ENCODE measurements at regions of chr9 and their contacts with region 1.

Region 1: DNA sequence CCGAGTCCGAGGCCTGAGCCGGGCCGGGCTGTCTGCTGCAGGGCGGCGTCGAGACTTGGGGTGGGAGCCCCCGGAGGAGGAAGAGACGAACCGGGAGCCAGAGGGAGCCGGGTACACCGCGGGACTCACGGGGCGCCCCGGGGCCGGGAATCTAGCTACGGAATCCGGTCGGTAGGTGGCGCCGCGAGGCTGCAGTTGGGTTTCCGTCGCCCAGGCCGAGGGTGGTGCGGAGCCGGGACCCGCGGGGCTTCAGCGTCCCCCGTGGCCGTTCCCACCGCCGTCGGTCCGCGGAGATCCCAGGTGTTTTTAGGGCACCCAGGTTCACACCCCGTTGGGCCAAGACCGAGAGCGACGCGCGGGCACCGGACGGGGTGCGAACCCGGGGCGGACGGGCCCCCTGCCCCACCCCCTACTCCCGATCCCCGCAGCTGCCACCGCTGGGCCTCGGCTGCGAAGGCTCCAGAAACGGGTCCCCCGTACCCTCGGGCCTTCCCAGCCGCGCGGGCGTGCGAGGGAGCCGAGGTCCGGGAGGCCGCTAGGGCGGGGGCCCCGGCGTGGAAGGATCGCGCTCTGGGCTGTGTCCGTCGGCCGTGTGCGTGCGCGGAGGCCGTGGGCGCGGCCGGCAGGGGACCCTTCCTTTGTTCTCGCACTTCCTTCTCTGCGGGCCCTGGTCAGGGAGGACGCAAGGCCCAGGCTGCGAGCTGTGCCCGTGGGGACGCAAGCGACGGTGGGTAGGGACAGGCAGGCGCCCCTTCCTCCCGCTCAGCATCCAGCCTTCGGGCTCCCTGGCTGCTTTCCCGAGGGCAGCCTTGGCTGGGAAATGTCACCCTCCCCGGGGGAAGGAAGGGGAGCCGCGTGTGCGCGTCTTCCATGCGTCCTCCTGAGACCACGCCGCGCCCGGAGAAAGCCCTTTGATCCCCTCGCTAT is 146.6 kb downstream of the GAPVD1 start:
- DNase-seq: peak; percentile 62 to 85 (median 80)
- H3K4me3 ChIP-seq: peak overlapping the region; percentile 33 to 61 (median 45)
- H3K27ac ChIP-seq: peak overlapping the region in 4 of 5 donors; percentile 17 to 64 (median 39)
- H3K4me1 ChIP-seq: peaks cover 0 to 4% of the 10 kb centered on the region in 2 donors
- H3K27me3 ChIP-seq: no peaks in the 10 kb centered on the region
- CTCF ChIP-seq: peak; percentile 52 to 86 (median 79)
- POLR2A ChIP-seq: no peak

Region 2: GRCh38 chr9:125561509-125562217 is 153.4 kb after region 1 on chr9:
- intact Hi-C with region 1: loop called in 1 of 2 experiments (anchors 5 kb)
- DNase-seq: no peak
- H3K4me3 ChIP-seq: no peak overlapping the region
- H3K27ac ChIP-seq: no peak overlapping the region
- H3K4me1 ChIP-seq: peaks cover 0 to 7% of the 10 kb centered on the region in 2 donors
- H3K27me3 ChIP-seq: no peaks in the 10 kb centered on the region
- CTCF ChIP-seq: no peak
- POLR2A ChIP-seq: no peak

Region 3: GRCh38 chr9:125631391-125632085 is 223.3 kb after region 1 on chr9:
- intact Hi-C with region 1: loop called (anchors 5 to 10 kb)
- DNase-seq: peak; percentile 25 to 72 (median 37)
- H3K4me3 ChIP-seq: no peak overlapping the region
- H3K27ac ChIP-seq: no peak overlapping the region
- H3K4me1 ChIP-seq: peaks cover 24 to 27% of the 10 kb centered on the region in 2 donors
- H3K27me3 ChIP-seq: no peaks in the 10 kb centered on the region
- CTCF ChIP-seq: peak; percentile 39 to 76 (median 69)
- POLR2A ChIP-seq: no peak

Region 4: GRCh38 chr9:125732562-125732961 is 324.3 kb after region 1 on chr9:
- intact Hi-C with region 1: no loop called
- DNase-seq: no peak
- H3K4me3 ChIP-seq: no peak overlapping the region
- H3K27ac ChIP-seq: no peak overlapping the region
- H3K4me1 ChIP-seq: no peaks in the 10 kb centered on the region
- H3K27me3 ChIP-seq: no peaks in the 10 kb centered on the region
- CTCF ChIP-seq: no peak
- POLR2A ChIP-seq: no peak

Region 5: GRCh38 chr9:125746017-125746773 is 338.0 kb after region 1 on chr9:
- intact Hi-C with region 1: loop called in 1 of 2 experiments (anchors 5 kb)
- DNase-seq: peak; percentile 95 to 98 (median 96)
- H3K4me3 ChIP-seq: peak overlapping the region in 2 of 4 donors; percentile 36 to 80
- H3K27ac ChIP-seq: peak overlapping the region; percentile 37 to 91 (median 77)
- H3K4me1 ChIP-seq: peaks cover 11 to 27% of the 10 kb centered on the region in 2 donors
- H3K27me3 ChIP-seq: no peaks in the 10 kb centered on the region
- CTCF ChIP-seq: no peak
- POLR2A ChIP-seq: peak in 1 of 2 donors; percentile 77

Region 6: DNA sequence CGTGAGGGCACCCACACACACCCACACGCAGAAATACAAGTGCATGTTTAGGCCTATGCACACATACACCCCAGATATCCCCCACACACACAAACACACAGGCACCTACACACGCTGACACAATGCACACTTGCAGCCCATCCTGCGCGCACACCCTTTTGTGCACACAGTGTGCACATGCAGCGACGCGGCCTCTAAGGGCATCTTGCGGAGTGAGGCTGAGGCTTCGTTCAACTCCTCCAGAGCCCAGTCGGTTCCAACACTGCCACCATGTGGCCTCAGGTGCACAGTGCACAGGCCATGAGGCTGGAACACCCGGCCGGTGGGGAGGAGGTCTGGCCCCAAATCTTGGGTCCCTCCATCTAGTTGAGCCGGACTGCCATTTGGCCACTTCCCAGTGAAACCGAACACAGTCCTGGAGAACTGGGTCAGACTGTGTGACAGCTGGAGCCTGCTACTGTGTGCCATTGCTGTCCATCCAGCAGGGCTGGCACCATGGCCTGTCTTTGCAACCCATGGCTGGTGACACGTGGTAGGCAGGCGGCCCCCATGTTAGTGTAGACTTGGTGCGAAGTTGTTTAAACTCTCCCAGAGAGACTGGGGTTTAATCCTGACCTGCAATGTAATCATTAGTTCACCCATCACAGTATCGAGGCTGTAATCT is 820.7 kb after region 1 on chr9:
- intact Hi-C with region 1: loop called (anchors 5 to 10 kb)
- DNase-seq: peak; percentile 64 to 88 (median 75)
- H3K4me3 ChIP-seq: no peak overlapping the region
- H3K27ac ChIP-seq: no peak overlapping the region
- H3K4me1 ChIP-seq: no peaks in the 10 kb centered on the region
- H3K27me3 ChIP-seq: no peaks in the 10 kb centered on the region
- CTCF ChIP-seq: peak; percentile 87 to 95 (median 91)
- POLR2A ChIP-seq: no peak

Measured in adrenal gland (tissue), 19 donors.